Activated T-helper 2 cell treated with anti-CD3 and anti-CD28 coated beads, Interferon-gamma antibody, Interleukin-2, Interleukin-4, amounts not matched to agents 10 μg/mL and 5 μg/mL and 100 μg/mL, durations not matched to agents 14 hours and 24 hours and 36 hours (primary cell): ENCODE measurements at regions of chr2 and their contacts with region 1.

Region 1: DNA sequence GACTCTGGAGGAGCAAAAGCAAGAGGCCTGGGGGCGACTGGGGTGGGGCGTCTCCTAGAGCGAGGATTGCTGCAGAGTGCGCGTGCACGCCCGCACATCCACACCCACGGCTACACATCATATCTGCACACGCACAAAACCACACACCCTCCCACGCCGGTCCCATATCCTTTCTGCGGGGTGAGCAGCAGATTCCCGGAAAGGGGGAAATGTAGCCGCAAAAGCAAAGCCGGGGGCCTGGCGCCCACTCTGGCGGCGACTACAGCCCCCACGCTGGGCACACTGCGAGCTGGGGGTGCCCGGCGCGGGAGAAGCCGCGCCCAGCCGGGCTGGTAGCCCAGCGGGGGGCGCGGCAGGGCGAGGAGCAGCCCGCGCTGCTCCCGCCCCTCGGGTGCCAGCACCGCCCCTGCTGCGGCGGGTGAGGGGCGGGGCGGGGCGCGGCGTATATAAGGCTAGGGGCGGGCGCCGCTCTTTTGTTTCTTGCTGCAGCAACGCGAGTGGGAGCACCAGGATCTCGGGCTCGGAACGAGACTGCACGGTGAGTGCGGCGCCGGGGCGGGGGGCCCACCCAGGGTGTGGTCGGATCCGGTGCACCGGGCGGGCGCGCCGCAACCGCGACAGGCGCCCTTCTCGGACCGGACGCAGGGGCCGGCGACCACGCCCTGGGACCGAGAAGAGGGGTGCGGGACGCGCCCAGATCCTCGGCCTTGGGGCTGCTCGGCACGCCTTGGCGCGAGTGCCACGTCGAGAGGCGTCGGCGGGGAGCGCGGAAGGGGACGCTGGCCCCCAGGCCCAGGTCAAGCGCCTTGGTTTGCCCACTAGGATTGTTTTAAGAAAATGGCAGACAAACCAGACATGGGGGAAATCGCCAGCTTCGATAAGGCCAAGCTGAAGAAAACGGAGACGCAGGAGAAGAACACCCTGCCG is at the start of gene TMSB10:
- DNase-seq: peak; percentile 90
- H3K4me3 Mint-ChIP-seq: peak within 1 kb of the TSS; percentile 83
- H3K27ac Mint-ChIP-seq: peak within 1 kb of the TSS; percentile 76
- H3K4me1 Mint-ChIP-seq: peaks cover 46% of the 10 kb centered on the region
- H3K27me3 Mint-ChIP-seq: no peaks in the 10 kb centered on the region
- total RNA-seq, gene TMSB10: 2,676 and 2,847 TPM in 2 replicates

Region 2: GRCh38 chr2:84800194-84800805 is 105.1 kb before region 1 on chr2:
- intact Hi-C with region 1: no loop called
- DNase-seq: no peak
- H3K4me3 Mint-ChIP-seq: no peak overlapping the region
- H3K27ac Mint-ChIP-seq: no peak overlapping the region
- H3K4me1 Mint-ChIP-seq: peaks cover 9% of the 10 kb centered on the region
- H3K27me3 Mint-ChIP-seq: peaks cover 5% of the 10 kb centered on the region

Region 3: GRCh38 chr2:84888401-84889276 is 16.8 kb before region 1 on chr2:
- intact Hi-C with region 1: loop called (anchors 2 kb)
- DNase-seq: peak; percentile 53
- H3K4me3 Mint-ChIP-seq: peak overlapping the region; percentile 57
- H3K27ac Mint-ChIP-seq: peak overlapping the region; percentile 92
- H3K4me1 Mint-ChIP-seq: peaks cover 39% of the 10 kb centered on the region
- H3K27me3 Mint-ChIP-seq: no peaks in the 10 kb centered on the region

Region 4: GRCh38 chr2:84919885-84920580 is 14.6 kb after region 1 on chr2:
- intact Hi-C with region 1: loop called (anchors 1 kb)
- DNase-seq: no peak
- H3K4me3 Mint-ChIP-seq: peak overlapping the region; percentile 48
- H3K27ac Mint-ChIP-seq: peak overlapping the region; percentile 93
- H3K4me1 Mint-ChIP-seq: peaks cover 42% of the 10 kb centered on the region
- H3K27me3 Mint-ChIP-seq: no peaks in the 10 kb centered on the region